K562 (cell line): ENCODE measurements at regions of chr15 and their contacts with region 1.

Region 1: DNA sequence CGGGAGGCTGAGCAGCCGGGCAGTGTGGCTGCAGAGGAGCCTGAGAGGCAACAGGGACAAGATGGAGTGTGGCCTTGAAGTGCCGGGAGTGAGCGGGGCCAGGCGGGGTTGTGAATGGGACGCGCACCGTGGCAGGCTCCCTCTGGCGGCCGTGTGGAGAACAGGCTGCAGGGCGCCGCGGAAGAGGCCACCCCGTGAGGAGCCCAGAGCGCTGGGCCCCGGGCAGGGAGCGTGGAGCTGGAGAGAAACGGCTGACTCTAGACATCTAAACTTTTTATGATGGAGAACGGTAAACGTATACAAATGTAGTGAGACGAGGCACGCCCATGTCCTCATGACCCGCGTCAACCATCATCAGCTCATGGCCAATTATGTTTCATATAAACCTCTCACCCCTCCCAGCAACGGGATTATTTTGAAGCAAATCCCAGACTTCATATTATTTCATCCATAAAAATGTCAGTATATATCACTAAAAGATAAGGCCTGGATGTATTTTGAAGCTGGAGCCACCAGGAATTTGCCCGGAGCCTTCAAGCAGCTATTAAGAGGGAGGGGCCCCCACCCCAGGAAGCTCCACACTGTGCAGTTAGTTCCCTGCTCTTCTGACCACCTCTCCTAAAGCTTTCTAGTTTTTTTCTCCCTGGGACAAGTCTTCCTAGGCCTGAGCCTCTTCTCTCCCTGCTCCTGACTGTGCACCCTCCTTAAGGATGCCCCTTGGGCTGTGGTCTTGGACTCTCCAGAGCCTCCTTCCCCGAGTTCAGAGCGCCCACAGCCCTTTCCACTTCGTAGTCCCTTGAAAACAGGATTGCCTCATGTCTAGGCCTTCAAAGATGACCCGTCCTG is 149.4 kb downstream of the SMAD6 start:
- DNase-seq: peak; percentile 91 to 93 (median 92)
- ATAC-seq: peak; percentile 96
- H3K4me3 ChIP-seq: no peak overlapping the region
- H3K27ac ChIP-seq: no peak overlapping the region
- H3K4me1 ChIP-seq: peaks cover 24 to 40% of the 10 kb centered on the region in 2 experiments; a peak in 4 of 5 replicates
- H3K27me3 ChIP-seq: no peaks in the 10 kb centered on the region
- CTCF ChIP-seq: peak; percentile 91 to 97 (median 92)
- EP300 ChIP-seq: no peak
- POLR2A ChIP-seq: no peak
- RAD21 ChIP-seq: peak; percentile 74 to 90

Region 2: DNA sequence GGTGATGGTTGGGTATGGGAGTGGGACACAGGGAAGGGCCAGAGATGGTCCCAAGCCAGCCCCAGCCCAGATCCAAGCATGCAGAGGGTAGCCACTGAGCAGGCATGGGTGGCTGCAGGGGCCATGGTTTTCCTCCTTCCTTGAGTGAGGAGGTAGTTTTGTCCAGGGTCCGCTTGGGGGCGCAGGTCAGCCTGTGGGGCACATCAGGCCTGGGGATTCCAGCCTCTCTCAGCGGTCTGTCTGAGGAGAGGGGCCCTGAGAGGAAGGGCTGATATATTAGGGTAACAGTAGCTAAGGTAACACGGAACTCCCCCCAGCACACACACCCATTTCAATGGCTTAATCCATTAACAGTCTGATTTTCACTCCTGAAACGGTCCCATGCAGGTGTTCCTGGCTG is 262.9 kb before region 1 on chr15:
- CTCF ChIA-PET with region 1: interaction called, 3 read pairs
- POLR2A ChIA-PET with region 1: interaction called, 3 read pairs
- in situ Hi-C with region 1: loop called (anchors 10 kb)
- intact Hi-C with region 1: loop called (anchors 5 kb)
- DNase-seq: peak; percentile 47 to 73 (median 55)
- ATAC-seq: peak; percentile 80
- H3K4me3 ChIP-seq: no peak overlapping the region
- H3K27ac ChIP-seq: no peak overlapping the region
- H3K4me1 ChIP-seq: peaks cover 55 to 59% of the 10 kb centered on the region in 2 experiments
- H3K27me3 ChIP-seq: no peaks in the 10 kb centered on the region
- CTCF ChIP-seq: peak; percentile 61 to 85 (median 71)
- EP300 ChIP-seq: no peak
- POLR2A ChIP-seq: no peak
- RAD21 ChIP-seq: peak in 1 of 2 experiments; percentile 61

Region 3: DNA sequence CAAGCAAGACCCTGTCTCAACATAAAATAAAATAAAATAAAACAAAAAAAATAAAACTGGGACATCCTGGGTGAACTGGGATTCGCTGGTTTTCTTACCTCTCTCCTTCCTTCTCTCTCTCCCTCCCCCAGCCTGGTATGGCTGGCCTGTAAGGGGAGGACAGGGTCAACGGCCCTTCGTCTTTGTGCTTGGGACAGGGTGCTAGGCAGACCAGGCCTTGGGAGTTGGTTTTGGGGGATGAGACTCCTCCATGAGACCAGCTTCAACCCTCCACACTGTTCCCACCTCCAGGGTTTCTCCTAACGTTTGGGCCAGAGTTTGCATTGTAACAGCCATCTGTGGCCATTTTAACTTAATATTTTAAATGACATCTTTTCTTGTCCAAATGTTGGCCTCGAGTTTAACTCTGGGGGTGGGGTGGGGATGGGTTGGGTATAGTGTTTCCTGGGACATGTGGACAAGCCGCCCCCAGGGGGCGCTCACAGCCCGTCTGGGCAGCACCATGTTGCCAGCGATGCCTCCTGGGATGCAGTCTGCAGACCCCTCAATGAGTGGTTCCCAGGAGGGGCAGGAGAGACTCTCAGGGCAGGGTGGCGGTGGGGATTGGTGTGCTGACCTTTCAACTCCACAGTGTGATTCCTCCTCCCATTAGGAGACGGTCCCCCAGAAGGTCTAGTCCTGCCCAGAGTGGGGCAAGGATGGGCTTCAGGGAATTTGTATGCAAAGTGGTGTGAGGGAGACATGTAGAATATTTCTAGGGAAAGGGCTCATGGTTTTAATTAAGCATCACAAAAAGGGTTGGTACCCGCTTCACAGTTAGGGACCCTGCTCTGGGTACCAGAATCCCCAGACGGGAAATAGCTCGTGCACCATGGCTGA is 247.9 kb before region 1 on chr15:
- CTCF ChIA-PET with region 1: interaction called, 4 read pairs
- POLR2A ChIA-PET with region 1: interaction called, 3 read pairs
- in situ Hi-C with region 1: loop called (anchors 10 kb)
- intact Hi-C with region 1: loop called (anchors 2 kb)
- DNase-seq: peak; percentile 75 to 78 (median 76)
- ATAC-seq: peak; percentile 94
- H3K4me3 ChIP-seq: no peak overlapping the region
- H3K27ac ChIP-seq: no peak overlapping the region
- H3K4me1 ChIP-seq: peaks cover 0 to 4% of the 10 kb centered on the region in 2 experiments; a peak in 3 of 5 replicates
- H3K27me3 ChIP-seq: no peaks in the 10 kb centered on the region
- CTCF ChIP-seq: peak; percentile 77 to 79 (median 79)
- EP300 ChIP-seq: no peak
- POLR2A ChIP-seq: no peak
- RAD21 ChIP-seq: peak; percentile 53 to 73

Region 4: GRCh38 chr15:66707310-66708082 is 144.0 kb before region 1 on chr15:
- CTCF ChIA-PET with region 1: no interaction called
- POLR2A ChIA-PET with region 1: no interaction called
- in situ Hi-C with region 1: no loop called
- intact Hi-C with region 1: loop called (anchors 5 kb)
- DNase-seq: no peak
- ATAC-seq: no peak
- H3K4me3 ChIP-seq: no peak overlapping the region
- H3K27ac ChIP-seq: no peak overlapping the region
- H3K4me1 ChIP-seq: peaks cover 0 to 40% of the 10 kb centered on the region in 2 experiments; a peak in 3 of 5 replicates
- H3K27me3 ChIP-seq: no peaks in the 10 kb centered on the region
- CTCF ChIP-seq: no peak
- EP300 ChIP-seq: no peak
- POLR2A ChIP-seq: no peak
- RAD21 ChIP-seq: no peak

Region 5: GRCh38 chr15:66789029-66790025 is 62.1 kb before region 1 on chr15:
- CTCF ChIA-PET with region 1: interaction called, 15 read pairs
- POLR2A ChIA-PET with region 1: no interaction called
- in situ Hi-C with region 1: no loop called
- intact Hi-C with region 1: loop called (anchors 1 kb)
- DNase-seq: peak; percentile 62 to 72 (median 67)
- ATAC-seq: peak; percentile 94
- H3K4me3 ChIP-seq: no peak overlapping the region
- H3K27ac ChIP-seq: no peak overlapping the region
- H3K4me1 ChIP-seq: no peaks in the 10 kb centered on the region
- H3K27me3 ChIP-seq: no peaks in the 10 kb centered on the region
- CTCF ChIP-seq: peak; percentile 65 to 75 (median 72)
- EP300 ChIP-seq: no peak
- POLR2A ChIP-seq: no peak
- RAD21 ChIP-seq: peak; percentile 47 to 80

Region 6: GRCh38 chr15:66907826-66908743 is 56.6 kb after region 1 on chr15:
- CTCF ChIA-PET with region 1: interaction called, 10 read pairs
- POLR2A ChIA-PET with region 1: interaction called, 3 read pairs
- in situ Hi-C with region 1: no loop called
- intact Hi-C with region 1: no loop called
- DNase-seq: no peak
- ATAC-seq: peak; percentile 60
- H3K4me3 ChIP-seq: no peak overlapping the region
- H3K27ac ChIP-seq: no peak overlapping the region
- H3K4me1 ChIP-seq: peaks cover 0 to 11% of the 10 kb centered on the region in 2 experiments; a peak in 3 of 5 replicates
- H3K27me3 ChIP-seq: peaks cover 24 to 27% of the 10 kb centered on the region in 2 experiments
- CTCF ChIP-seq: no peak
- EP300 ChIP-seq: no peak
- POLR2A ChIP-seq: no peak
- RAD21 ChIP-seq: no peak